KBM-7 (cell line): ENCODE measurements at regions of chr6 and their contacts with region 1.

Region 1: DNA sequence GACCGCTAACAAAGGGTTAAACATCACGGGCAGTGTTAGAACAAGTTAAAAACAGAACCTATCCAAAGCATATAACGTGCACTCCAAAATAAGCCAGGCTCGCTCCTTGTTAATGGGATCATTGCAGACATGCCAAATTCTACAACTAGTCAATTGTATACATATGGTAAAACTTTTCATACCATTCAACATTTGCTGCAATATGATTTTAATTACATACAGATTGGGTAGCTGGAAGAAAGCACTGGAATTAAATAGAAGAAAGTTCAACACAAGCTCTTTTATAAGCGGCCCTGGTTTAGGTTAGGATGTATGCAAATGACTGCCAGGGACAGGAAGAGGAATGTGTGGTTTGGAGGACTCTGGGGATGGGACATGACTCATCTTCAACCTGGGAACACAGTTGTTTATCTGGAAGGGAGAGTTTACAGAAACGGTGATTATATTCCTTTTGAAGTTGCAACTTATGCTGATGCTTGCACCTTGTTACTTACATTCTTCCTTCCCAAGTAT is 62.5 kb upstream of the TIAM2 start:
- DNase-seq: peak; percentile 28

Region 2: DNA sequence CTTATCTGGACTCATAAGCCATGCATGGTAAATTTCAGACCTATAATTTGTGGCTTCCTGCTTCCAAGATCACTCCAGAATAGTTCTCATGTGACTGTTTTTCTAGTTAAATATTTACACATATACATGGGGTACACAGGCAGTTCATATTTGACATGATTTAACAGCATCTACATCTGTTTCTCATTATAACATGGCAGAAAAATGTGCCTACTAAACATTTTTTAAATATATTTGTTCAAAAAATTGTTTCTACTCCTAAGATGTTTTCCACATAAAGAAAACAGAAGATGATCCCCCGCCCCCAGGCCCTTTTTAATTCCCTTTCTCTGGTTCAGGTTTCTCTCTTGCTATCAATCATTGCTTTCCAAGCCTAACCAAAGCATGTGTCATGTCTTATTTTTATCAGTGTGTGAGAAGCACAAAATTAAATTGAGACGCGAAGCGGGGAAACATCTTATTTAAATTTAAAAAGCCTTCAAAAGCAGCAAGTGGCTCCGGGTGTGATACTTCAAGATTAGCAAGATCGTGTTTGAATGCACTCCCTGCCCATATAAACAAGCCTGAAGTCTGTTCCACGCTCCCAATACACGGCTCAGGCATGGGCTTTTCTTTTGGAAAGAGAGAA is 613.2 kb before region 1 on chr6:
- in situ Hi-C with region 1: no loop called
- DNase-seq: no peak

Region 3: GRCh38 chr6:154675602-154676088 is 256.9 kb before region 1 on chr6:
- in situ Hi-C with region 1: no loop called
- DNase-seq: peak; percentile 98

Region 4: DNA sequence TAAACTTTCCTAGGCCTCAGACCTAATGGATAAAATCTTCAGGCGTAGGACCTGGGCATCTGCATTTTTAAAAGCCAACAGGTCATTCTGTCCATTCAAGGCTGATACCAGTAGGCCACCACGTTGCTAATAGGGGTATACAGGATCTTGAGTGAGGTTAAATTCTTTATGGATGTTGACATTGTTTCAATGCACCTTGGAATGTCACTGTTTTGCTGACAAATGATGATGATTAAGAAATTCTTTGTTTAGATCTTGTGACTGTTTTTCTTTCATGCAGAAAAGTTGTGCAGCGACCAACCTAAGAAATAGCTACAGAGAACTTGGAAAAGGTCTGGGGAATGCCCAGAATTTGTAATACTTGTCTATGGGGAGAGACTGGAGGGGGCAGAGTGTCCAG is 230.1 kb after region 1 on chr6:
- in situ Hi-C with region 1: loop called (anchors 10 kb)
- DNase-seq: no peak